ENCODE measurements at regions of chr5 and their contacts with region 1.

Region 1: GRCh38 chr5:54310433-54311175 is at the start of gene ARL15:
- DNase-seq: peak; percentile 93
- ATAC-seq: peak; percentile 95
- H3K4me3 Mint-ChIP-seq: peak within 1 kb of the TSS; percentile 97
- H3K27ac Mint-ChIP-seq: peak within 1 kb of the TSS; percentile 91
- H3K4me1 Mint-ChIP-seq: peaks cover 24% of the 10 kb centered on the region
- H3K27me3 Mint-ChIP-seq: peaks cover 4% of the 10 kb centered on the region
- CTCF ChIP-seq: no peak
- total RNA-seq, gene ARL15: 13.0 and 17.5 TPM in 2 replicates

Region 2: DNA sequence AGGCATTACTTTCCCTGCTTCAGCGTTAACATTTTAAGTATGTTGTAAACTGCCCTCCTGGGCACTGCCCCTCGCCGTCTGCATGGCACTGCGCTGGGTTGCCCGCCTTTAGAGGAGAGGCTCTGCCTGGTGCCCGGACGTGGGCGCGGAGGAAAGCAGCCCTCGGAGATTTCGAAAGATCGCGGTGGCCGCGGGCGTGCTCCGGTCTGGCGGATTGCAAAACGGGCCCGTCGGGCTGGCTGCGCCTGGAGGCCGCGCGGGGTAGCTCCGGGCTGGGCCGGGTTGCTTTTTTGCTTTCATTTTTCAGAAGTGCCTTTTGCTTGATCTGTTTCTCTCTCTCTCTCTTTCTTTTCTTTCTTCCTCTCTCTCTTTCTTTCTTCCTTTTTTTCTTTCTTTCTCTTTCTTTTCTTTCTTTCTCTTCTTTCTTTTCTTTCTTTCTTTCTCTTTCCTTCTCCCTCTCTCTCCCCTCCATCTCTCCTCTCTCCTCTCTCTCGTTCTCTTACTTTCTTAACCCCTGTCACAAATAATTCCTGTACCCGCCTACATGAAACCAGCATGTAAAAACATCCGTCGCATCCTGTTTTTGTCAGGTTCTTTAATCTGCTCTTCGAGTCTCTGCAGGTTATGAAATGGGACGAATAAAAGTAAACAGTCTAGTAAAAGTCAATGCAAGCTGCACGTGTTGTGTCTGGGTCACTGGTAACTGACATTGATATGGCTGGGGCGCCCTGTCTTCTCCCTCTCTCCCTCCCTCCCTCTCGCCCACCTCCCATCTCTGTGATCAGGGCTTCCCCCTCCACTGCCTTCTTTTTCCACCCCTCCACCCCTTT is 828.5 kb before region 1 on chr5:
- CTCF ChIA-PET with region 1: no interaction called
- POLR2A ChIA-PET with region 1: no interaction called
- intact Hi-C with region 1: loop called (anchors 2 kb)
- DNase-seq: peak; percentile 40
- ATAC-seq: peak; percentile 62
- H3K4me3 Mint-ChIP-seq: peak overlapping the region; percentile 84
- H3K27ac Mint-ChIP-seq: no peak overlapping the region
- H3K4me1 Mint-ChIP-seq: peaks cover 39% of the 10 kb centered on the region
- H3K27me3 Mint-ChIP-seq: peaks cover 44% of the 10 kb centered on the region
- CTCF ChIP-seq: peak; percentile 24

Region 3: DNA sequence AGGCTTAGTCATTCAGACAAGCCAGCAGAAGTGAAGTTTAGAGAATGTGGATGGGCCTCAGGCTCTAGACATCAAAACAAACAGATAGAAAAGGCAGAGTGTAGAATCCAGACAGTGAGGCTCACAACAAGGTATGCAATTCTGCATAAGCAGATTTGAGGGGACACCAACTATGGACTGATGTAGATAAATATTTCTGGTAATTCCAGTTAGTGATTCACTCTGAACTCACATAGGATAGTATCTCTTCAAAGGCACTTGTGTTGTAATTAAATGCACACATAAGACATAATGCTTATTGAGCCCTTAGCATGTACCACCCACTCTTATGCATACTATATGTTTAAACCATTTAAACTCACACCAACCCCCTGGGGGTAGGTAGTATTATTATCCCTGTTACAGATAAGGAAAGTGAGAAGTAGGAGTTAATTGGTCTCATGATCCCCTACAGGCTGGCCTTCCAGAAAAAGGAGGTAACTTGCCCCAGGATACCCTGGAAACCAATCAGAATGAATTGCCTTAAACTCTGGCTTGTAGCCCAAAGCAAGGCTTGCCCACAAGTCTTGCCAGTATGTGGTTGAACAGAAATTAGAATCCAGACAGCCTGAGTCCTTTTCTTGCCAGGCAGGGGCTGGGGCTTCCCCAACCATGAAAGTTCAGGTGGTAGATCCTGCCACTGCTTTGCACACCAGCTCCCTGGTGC is 105.4 kb after region 1 on chr5:
- CTCF ChIA-PET with region 1: interaction called, 5 read pairs
- POLR2A ChIA-PET with region 1: no interaction called
- intact Hi-C with region 1: loop called (anchors 1 kb)
- DNase-seq: no peak
- ATAC-seq: no peak
- H3K4me3 Mint-ChIP-seq: no peak overlapping the region
- H3K27ac Mint-ChIP-seq: no peak overlapping the region
- H3K4me1 Mint-ChIP-seq: no peaks in the 10 kb centered on the region
- H3K27me3 Mint-ChIP-seq: peaks cover 16% of the 10 kb centered on the region
- CTCF ChIP-seq: no peak

Region 4: DNA sequence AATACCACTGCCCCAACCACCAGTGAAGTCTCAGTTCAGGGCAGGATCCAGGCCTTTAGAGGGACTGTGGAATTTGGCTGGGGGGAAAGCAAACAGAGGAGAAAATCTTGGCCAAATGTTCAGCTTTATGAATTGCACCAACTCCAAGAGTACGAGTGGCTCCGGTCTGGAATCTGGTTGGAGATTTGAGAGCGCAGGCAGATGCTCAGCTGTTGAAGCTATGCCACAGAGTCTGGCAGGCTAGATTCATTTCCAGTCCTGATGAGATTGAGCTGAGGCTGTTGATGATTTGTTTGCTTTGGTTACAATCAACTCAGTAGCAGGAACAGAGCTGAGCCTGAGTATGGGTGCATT is 135.8 kb after region 1 on chr5:
- CTCF ChIA-PET with region 1: no interaction called
- POLR2A ChIA-PET with region 1: no interaction called
- intact Hi-C with region 1: no loop called
- DNase-seq: no peak
- ATAC-seq: no peak
- H3K4me3 Mint-ChIP-seq: no peak overlapping the region
- H3K27ac Mint-ChIP-seq: no peak overlapping the region
- H3K4me1 Mint-ChIP-seq: no peaks in the 10 kb centered on the region
- H3K27me3 Mint-ChIP-seq: no peaks in the 10 kb centered on the region
- CTCF ChIP-seq: no peak

Region 5: DNA sequence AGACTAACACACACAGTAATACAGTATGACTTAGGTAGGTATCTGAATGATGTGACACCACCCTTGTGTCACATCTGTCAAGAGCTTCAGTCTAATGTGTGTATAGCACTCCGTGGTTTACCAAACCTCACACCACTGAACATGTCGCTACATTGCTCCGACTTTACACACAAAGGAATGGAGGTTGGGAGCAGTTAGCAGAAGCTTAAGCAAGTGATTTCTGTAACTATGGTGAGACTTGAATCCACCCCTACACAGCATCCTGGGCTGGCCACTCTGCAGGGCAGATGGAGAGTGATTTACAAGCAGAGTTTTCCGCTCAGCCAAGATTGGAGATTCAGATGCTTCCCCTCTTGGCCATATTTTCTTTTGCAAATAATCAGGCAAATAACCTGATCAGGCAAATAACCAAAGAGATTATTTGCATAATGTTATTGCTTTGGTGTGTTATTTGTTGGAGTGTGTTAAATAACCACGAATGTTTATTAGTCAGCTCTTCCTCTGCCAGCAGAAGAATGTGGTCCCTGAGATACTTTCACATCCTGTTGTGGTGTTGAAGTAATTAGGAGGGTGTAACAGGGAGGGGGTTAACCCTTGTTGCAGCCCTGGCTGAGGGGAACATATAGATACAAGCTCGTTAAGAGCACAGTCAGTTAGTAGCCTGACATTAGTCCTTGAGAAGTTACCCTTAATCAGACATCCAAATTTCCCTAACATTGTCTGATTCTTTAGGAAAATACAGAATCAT is 299.8 kb after region 1 on chr5:
- CTCF ChIA-PET with region 1: no interaction called
- POLR2A ChIA-PET with region 1: interaction called, 4 read pairs
- intact Hi-C with region 1: loop called (anchors 1 kb)
- DNase-seq: no peak
- ATAC-seq: peak; percentile 94
- H3K4me3 Mint-ChIP-seq: peak overlapping the region; percentile 55
- H3K27ac Mint-ChIP-seq: peak overlapping the region; percentile 71
- H3K4me1 Mint-ChIP-seq: peaks cover 50% of the 10 kb centered on the region
- H3K27me3 Mint-ChIP-seq: no peaks in the 10 kb centered on the region
- CTCF ChIP-seq: no peak

Region 6: GRCh38 chr5:55172051-55172899 is 861.7 kb after region 1 on chr5:
- CTCF ChIA-PET with region 1: no interaction called
- POLR2A ChIA-PET with region 1: no interaction called
- intact Hi-C with region 1: loop called (anchors 2 kb)
- DNase-seq: no peak
- ATAC-seq: peak; percentile 53
- H3K4me3 Mint-ChIP-seq: peak overlapping the region; percentile 88
- H3K27ac Mint-ChIP-seq: no peak overlapping the region
- H3K4me1 Mint-ChIP-seq: peaks cover 33% of the 10 kb centered on the region
- H3K27me3 Mint-ChIP-seq: peaks cover 51% of the 10 kb centered on the region
- CTCF ChIP-seq: peak; percentile 88